ENCODE measurements at regions of chr17 and their contacts with region 1.

Region 1: DNA sequence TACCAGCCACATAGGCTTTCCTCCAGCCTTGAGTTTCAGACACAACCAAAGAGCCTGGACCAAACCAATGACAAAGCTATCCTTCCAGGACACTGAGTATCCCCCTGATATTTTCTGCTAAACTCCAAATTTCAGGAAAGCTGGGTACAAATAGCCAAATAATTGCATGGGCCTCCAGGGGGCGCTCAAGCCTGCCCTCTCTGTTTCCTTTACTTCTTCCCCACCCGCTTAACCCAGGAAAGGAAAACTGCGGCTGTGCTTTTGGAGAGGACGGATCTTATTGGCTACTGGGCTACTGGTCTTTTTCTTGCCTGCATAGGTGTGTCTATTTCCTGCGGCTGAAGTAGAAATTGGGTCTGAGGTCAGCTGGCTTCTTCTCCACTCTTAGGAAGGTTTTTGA is 30.1 kb downstream of the GNGT2 start:
- DNase-seq: peak; percentile 52 to 70
- ATAC-seq: peak in 3 of 4 donors; percentile 53 to 71 (median 62)
- H3K4me3 ChIP-seq: no peak overlapping the region
- H3K27ac ChIP-seq: no peak overlapping the region
- H3K4me1 ChIP-seq: no peaks in the 10 kb centered on the region
- H3K27me3 ChIP-seq: peaks cover 0 to 6% (median 0%) of the 10 kb centered on the region in 3 donors
- CTCF ChIP-seq: peak; percentile 72

Region 2: DNA sequence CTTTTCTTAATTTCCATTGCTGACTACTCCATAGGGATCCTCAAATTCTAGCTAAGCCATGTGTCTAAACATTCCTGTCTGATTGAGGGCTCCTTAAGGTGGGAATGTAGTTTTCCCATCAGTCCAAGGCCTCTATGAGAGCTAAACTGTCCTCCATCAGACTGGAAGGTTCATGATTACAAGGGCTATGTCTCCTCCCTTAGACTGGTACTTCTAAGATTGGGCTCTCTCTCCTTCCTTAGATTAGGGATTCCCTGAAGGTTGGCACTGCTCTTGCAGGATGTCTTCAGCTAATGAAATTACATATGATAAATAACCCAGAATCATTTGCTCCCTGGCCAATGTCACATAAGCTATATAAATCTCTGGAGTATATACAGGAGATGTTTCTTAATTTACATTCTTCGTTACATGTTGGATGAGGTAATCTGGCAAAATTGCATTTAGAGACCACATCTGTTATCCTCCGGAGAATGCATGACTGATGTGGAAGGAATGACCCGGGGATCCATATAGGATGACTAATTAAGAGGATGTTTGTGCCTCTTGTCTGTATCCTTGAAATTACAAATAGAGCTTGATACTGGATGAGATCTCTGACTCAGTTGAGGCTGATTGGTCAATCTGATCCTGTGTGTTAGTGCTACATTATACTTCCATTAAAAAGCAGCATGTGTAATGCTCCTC is 33.5 kb before region 1 on chr17:
- intact Hi-C with region 1: no loop called
- DNase-seq: no peak
- ATAC-seq: no peak
- H3K4me3 ChIP-seq: no peak overlapping the region
- H3K27ac ChIP-seq: no peak overlapping the region
- H3K4me1 ChIP-seq: no peaks in the 10 kb centered on the region
- H3K27me3 ChIP-seq: peaks cover 0 to 57% (median 10%) of the 10 kb centered on the region in 3 donors
- CTCF ChIP-seq: no peak

Region 3: GRCh38 chr17:49290690-49291359 is 110.5 kb after region 1 on chr17:
- intact Hi-C with region 1: loop called in 1 of 2 experiments (anchors 5 kb)
- DNase-seq: no peak
- ATAC-seq: peak in 2 of 4 donors; percentile 50 to 55
- H3K4me3 ChIP-seq: no peak overlapping the region
- H3K27ac ChIP-seq: no peak overlapping the region
- H3K4me1 ChIP-seq: no peaks in the 10 kb centered on the region
- H3K27me3 ChIP-seq: no peaks in the 10 kb centered on the region
- CTCF ChIP-seq: peak; percentile 67